Astrocyte of the cerebellum (primary cell): ENCODE measurements at regions of chr6 and their contacts with region 1.

Region 1: GRCh38 chr6:3500262-3501016 is 43.6 kb upstream of the SLC22A23 start:
- DNase-seq: peak; percentile 79
- H3K4me3 ChIP-seq: no peak overlapping the region
- CTCF ChIP-seq: no peak

Region 2: GRCh38 chr6:3414327-3415075 is 85.9 kb before region 1 on chr6:
- in situ Hi-C with region 1: loop called (anchors 5 kb)
- DNase-seq: no peak
- H3K4me3 ChIP-seq: no peak overlapping the region
- CTCF ChIP-seq: no peak

Region 3: DNA sequence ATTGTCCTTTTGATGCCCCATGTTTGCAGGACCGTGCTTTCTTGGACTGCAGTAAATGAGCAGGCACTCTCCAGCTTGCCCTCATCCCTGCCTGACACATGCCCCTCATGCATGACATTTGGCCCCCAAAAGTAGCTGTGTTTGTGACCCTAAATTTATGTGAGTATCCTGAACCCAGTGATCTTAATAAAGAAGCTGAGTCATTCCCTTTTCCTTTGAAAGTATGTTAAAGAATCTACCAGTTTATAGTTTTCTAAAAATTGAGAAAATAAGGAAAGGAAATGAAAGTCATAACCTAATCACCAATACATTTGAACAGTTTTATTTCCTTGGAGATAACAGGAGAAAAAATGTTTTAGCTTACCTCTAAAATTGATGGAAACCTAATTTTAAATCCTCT is 40.2 kb before region 1 on chr6:
- in situ Hi-C with region 1: loop called (anchors 5 kb)
- DNase-seq: no peak
- H3K4me3 ChIP-seq: no peak overlapping the region
- CTCF ChIP-seq: no peak